ENCODE measurements at regions of chr1 and their contacts with region 1.

Region 1: DNA sequence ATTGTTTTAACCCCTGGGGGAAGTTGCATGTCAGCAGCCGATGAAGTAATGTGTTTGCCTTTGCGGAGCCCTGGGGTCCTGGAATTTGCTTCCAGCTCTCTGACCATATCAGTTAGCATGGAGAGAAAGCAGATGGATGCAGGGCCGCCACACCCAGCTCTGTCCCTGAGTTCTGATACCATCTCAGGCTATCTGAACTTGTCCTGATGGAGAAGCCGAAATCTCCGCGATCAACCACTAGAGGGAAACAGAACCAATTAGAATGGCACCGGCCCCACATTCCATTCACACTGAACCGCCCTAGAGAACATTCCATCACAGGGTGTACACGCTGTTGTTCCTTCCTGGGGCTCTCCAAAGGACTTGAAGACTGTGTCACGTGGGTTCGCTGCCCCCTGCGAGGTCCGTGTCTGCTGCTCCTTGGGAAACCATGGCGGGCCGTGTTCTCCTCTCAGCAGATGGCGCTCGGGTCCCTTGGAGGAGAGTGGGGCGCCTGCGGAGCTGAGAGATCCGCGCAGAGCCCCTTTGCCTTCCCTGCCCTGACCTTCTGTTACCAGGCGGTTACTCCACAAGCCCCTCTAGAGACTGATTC is 75.4 kb downstream of the ABCA4 start:
- DNase-seq: peak; percentile 23 to 50
- ATAC-seq: peak; percentile 51 to 71 (median 68)
- H3K4me3 ChIP-seq: no peak overlapping the region
- H3K4me3 Mint-ChIP-seq: peak overlapping the region; percentile 74
- H3K27ac ChIP-seq: no peak overlapping the region
- H3K27ac Mint-ChIP-seq: no peak overlapping the region
- H3K4me1 ChIP-seq: peaks cover 6% of the 10 kb centered on the region
- H3K4me1 Mint-ChIP-seq: peaks cover 0 to 5% of the 10 kb centered on the region in 2 donors
- H3K27me3 ChIP-seq: no peaks in the 10 kb centered on the region
- H3K27me3 Mint-ChIP-seq: peaks cover 0 to 3% of the 10 kb centered on the region in 2 donors
- CTCF ChIP-seq: peak; percentile 55

Region 2: GRCh38 chr1:94335950-94336349 is 290.4 kb after region 1 on chr1:
- intact Hi-C with region 1: loop called (anchors 5 kb)
- DNase-seq: peak in 1 of 2 donors; percentile 47
- ATAC-seq: peak in 1 of 3 donors; percentile 58
- H3K4me3 ChIP-seq: no peak overlapping the region
- H3K4me3 Mint-ChIP-seq: no peak overlapping the region
- H3K27ac ChIP-seq: no peak overlapping the region
- H3K27ac Mint-ChIP-seq: no peak overlapping the region
- H3K4me1 ChIP-seq: no peaks in the 10 kb centered on the region
- H3K4me1 Mint-ChIP-seq: peaks cover 0 to 11% of the 10 kb centered on the region in 2 donors
- H3K27me3 ChIP-seq: peaks cover 4% of the 10 kb centered on the region
- H3K27me3 Mint-ChIP-seq: peaks cover 10 to 11% of the 10 kb centered on the region in 2 donors
- CTCF ChIP-seq: peak; percentile 53

Measured in natural killer cell (primary cell).